ENCODE measurements at regions of chr7 and their contacts with region 1.

Region 1: DNA sequence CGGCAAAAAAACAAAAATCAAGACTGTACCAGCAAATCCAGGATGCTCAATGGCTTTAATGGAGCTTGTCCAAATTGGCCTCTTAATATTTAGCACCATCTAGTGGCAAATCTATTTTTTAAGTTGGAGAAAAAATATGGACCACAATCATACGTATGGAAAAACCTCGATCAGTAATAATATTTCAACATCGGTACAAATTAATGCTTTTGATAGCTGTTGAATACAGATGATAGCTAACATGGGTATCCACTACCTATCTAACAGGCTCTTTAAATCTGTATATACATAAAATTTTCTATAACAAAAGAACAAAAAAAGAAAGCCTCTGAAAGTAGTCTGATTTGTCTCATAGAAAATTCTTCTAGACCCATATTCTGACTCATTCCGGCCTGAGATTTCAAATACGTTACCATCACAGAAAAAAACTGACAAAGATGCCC is 29.2 kb downstream of the COA1 start:
- DNase-seq: peak in 2 of 9 experiments; percentile 69 to 80
- ATAC-seq: peak; percentile 73
- H3K4me3 ChIP-seq: no peak overlapping the region
- H3K4me3 Mint-ChIP-seq: peak overlapping the region; percentile 50
- H3K27ac ChIP-seq: no peak overlapping the region
- H3K27ac Mint-ChIP-seq: peak overlapping the region; percentile 84
- H3K4me1 ChIP-seq: peaks cover 37% of the 10 kb centered on the region
- H3K4me1 Mint-ChIP-seq: peaks cover 44% of the 10 kb centered on the region
- H3K27me3 ChIP-seq: no peaks in the 10 kb centered on the region
- H3K27me3 Mint-ChIP-seq: no peaks in the 10 kb centered on the region
- CTCF ChIP-seq: peak; percentile 85

Region 2: DNA sequence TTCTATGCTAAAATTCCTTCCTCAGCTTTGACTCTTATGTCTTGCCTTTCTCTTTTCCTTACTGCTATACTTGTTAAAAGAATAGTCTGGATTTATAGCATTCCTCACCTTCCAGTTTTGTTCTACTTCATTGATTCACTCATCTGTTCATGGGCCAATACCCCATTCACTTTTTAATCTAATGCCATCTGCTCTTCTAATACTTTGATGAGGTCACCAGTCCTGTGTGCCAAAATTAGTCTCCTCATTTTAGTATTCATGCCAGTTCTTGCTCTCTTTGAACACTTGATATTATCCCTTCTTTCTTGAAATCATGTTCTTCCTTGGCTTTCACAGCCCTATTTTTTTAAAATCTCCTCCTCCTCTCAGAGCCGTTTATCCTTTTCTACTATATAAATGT is 97.8 kb before region 1 on chr7:
- CTCF ChIA-PET with region 1: interaction called, 5 read pairs
- POLR2A ChIA-PET with region 1: interaction called, 3 read pairs
- intact Hi-C with region 1: loop called in 1 of 2 experiments (anchors 5 kb)
- DNase-seq: no peak
- ATAC-seq: no peak
- H3K4me3 ChIP-seq: no peak overlapping the region
- H3K4me3 Mint-ChIP-seq: no peak overlapping the region
- H3K27ac ChIP-seq: peak overlapping the region in 1 of 2 experiments; percentile 40
- H3K27ac Mint-ChIP-seq: no peak overlapping the region
- H3K4me1 ChIP-seq: peaks cover 91% of the 10 kb centered on the region
- H3K4me1 Mint-ChIP-seq: peaks cover 50% of the 10 kb centered on the region
- H3K27me3 ChIP-seq: no peaks in the 10 kb centered on the region
- H3K27me3 Mint-ChIP-seq: no peaks in the 10 kb centered on the region
- CTCF ChIP-seq: no peak

Region 3: DNA sequence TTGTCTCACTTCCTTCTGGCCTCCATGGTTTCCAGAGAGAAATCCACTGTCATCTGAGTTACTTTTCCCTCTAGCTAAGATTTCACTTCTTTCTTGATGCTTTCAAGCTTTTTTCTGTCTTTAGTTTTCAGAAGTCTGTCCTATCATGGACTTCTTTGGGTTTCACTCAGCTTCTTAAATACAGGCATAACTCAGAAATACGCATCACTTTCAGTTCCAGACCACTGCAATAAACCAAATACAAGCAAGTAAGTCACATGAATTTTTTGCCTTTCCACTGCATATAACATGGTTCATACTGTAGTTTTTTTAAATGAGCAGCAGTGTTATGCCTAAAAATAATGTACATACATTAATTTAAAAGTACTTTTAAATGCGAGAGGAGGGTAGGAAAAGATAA is 68.5 kb before region 1 on chr7:
- CTCF ChIA-PET with region 1: interaction called, 19 read pairs
- POLR2A ChIA-PET with region 1: interaction called, 3 read pairs
- intact Hi-C with region 1: no loop called
- DNase-seq: peak in 1 of 9 experiments; percentile 57
- ATAC-seq: peak; percentile 47
- H3K4me3 ChIP-seq: no peak overlapping the region
- H3K4me3 Mint-ChIP-seq: peak overlapping the region; percentile 59
- H3K27ac ChIP-seq: peak overlapping the region; percentile 6 to 67
- H3K27ac Mint-ChIP-seq: peak overlapping the region; percentile 94
- H3K4me1 ChIP-seq: peaks cover 93% of the 10 kb centered on the region
- H3K4me1 Mint-ChIP-seq: peaks cover 94% of the 10 kb centered on the region
- H3K27me3 ChIP-seq: no peaks in the 10 kb centered on the region
- H3K27me3 Mint-ChIP-seq: no peaks in the 10 kb centered on the region
- CTCF ChIP-seq: no peak

Region 4: GRCh38 chr7:43647673-43648472 is 52.2 kb before region 1 on chr7:
- CTCF ChIA-PET with region 1: interaction called, 115 read pairs
- POLR2A ChIA-PET with region 1: interaction called, 35 read pairs
- intact Hi-C with region 1: loop called (anchors 1 to 2 kb)
- DNase-seq: peak in 7 of 9 experiments; percentile 42 to 72 (median 54)
- ATAC-seq: peak; percentile 13
- H3K4me3 ChIP-seq: peak overlapping the region; percentile 42 to 47
- H3K4me3 Mint-ChIP-seq: peak overlapping the region; percentile 77
- H3K27ac ChIP-seq: peak overlapping the region; percentile 75 to 83
- H3K27ac Mint-ChIP-seq: peak overlapping the region; percentile 100
- H3K4me1 ChIP-seq: peaks cover 91% of the 10 kb centered on the region
- H3K4me1 Mint-ChIP-seq: peaks cover 98% of the 10 kb centered on the region
- H3K27me3 ChIP-seq: no peaks in the 10 kb centered on the region
- H3K27me3 Mint-ChIP-seq: no peaks in the 10 kb centered on the region
- CTCF ChIP-seq: no peak

Region 5: DNA sequence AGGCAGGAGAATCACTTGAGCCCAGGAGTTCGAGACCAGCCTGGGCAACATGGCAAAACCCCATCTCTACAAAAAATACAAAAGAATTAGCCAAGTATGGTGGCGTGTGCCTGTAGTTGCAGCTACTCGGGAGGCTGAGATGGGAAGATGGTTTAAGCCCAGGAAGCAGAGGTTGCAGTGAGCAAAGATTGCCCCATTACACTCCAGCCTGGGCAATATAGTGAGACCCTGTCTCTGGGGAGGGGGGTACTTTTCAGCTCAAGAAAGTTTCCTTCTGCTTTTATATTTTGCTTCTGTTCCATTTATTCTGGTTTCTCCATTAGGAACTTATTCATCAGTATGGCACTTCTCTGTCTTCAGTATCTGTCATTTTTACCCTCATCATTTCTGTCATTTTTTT is 19.3 kb before region 1 on chr7:
- CTCF ChIA-PET with region 1: interaction called, 17 read pairs
- POLR2A ChIA-PET with region 1: interaction called, 5 read pairs
- intact Hi-C with region 1: loop called (anchors 2 kb)
- DNase-seq: no peak
- ATAC-seq: no peak
- H3K4me3 ChIP-seq: no peak overlapping the region
- H3K4me3 Mint-ChIP-seq: no peak overlapping the region
- H3K27ac ChIP-seq: peak overlapping the region in 1 of 2 experiments; percentile 5
- H3K27ac Mint-ChIP-seq: peak overlapping the region; percentile 88
- H3K4me1 ChIP-seq: peaks cover 56% of the 10 kb centered on the region
- H3K4me1 Mint-ChIP-seq: peaks cover 88% of the 10 kb centered on the region
- H3K27me3 ChIP-seq: no peaks in the 10 kb centered on the region
- H3K27me3 Mint-ChIP-seq: no peaks in the 10 kb centered on the region
- CTCF ChIP-seq: no peak

Region 6: GRCh38 chr7:43834463-43835251 is 134.6 kb after region 1 on chr7:
- CTCF ChIA-PET with region 1: interaction called, 31 read pairs
- POLR2A ChIA-PET with region 1: no interaction called
- intact Hi-C with region 1: loop called (anchors 1 to 5 kb)
- DNase-seq: peak in 7 of 9 experiments; percentile 10 to 85 (median 38)
- ATAC-seq: peak; percentile 63
- H3K4me3 ChIP-seq: peak overlapping the region; percentile 49 to 53
- H3K4me3 Mint-ChIP-seq: peak overlapping the region; percentile 85
- H3K27ac ChIP-seq: peak overlapping the region; percentile 35 to 71
- H3K27ac Mint-ChIP-seq: peak overlapping the region; percentile 83
- H3K4me1 ChIP-seq: peaks cover 12% of the 10 kb centered on the region
- H3K4me1 Mint-ChIP-seq: peaks cover 18% of the 10 kb centered on the region
- H3K27me3 ChIP-seq: no peaks in the 10 kb centered on the region
- H3K27me3 Mint-ChIP-seq: no peaks in the 10 kb centered on the region
- CTCF ChIP-seq: no peak

Measured in CD8-positive, alpha-beta T cell (primary cell).